Activated CD4-positive, alpha-beta memory T cell treated with anti-CD3 and anti-CD28 coated beads for 36 hours (primary cell): ENCODE measurements at regions of chr22 and their contacts with region 1.

Region 1: GRCh38 chr22:22748297-22748743 is 103.9 kb downstream of the GGTLC2 start:
- DNase-seq: peak; percentile 63
- H3K4me3 Mint-ChIP-seq: no peak overlapping the region
- H3K27ac Mint-ChIP-seq: no peak overlapping the region
- H3K4me1 Mint-ChIP-seq: peaks cover 8% of the 10 kb centered on the region
- H3K27me3 Mint-ChIP-seq: no peaks in the 10 kb centered on the region

Region 2: GRCh38 chr22:22138915-22139314 is 609.4 kb before region 1 on chr22:
- CTCF ChIA-PET with region 1: no interaction called
- POLR2A ChIA-PET with region 1: no interaction called
- intact Hi-C with region 1: no loop called
- DNase-seq: no peak
- H3K4me3 Mint-ChIP-seq: no peak overlapping the region
- H3K27ac Mint-ChIP-seq: no peak overlapping the region
- H3K4me1 Mint-ChIP-seq: no peaks in the 10 kb centered on the region
- H3K27me3 Mint-ChIP-seq: peaks cover 34% of the 10 kb centered on the region

Region 3: DNA sequence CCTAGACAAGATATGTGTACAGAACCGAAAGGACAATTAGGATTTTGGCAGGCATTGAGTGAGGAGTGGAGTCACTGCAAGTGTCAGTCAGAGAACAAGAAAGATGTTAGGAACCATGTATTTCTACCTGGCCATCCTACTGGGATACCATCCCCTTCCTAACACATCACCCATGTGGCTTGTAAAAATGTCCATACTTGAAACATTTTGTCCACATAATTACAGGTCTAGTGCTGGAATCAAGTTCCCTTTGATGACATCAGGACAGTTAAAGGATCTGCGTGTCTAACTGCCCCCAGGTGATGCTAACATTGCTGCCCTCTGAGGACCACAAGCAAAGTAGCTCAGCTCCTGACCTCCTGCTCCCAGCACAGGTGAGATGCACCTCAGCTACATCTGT is 135.8 kb before region 1 on chr22:
- CTCF ChIA-PET with region 1: no interaction called
- POLR2A ChIA-PET with region 1: no interaction called
- intact Hi-C with region 1: no loop called
- DNase-seq: no peak
- H3K4me3 Mint-ChIP-seq: no peak overlapping the region
- H3K27ac Mint-ChIP-seq: no peak overlapping the region
- H3K4me1 Mint-ChIP-seq: peaks cover 12% of the 10 kb centered on the region
- H3K27me3 Mint-ChIP-seq: peaks cover 9% of the 10 kb centered on the region

Region 4: GRCh38 chr22:22710719-22711531 is 37.4 kb before region 1 on chr22:
- CTCF ChIA-PET with region 1: interaction called, 15 read pairs
- POLR2A ChIA-PET with region 1: no interaction called
- intact Hi-C with region 1: loop called (anchors 5 kb)
- DNase-seq: peak; percentile 81
- H3K4me3 Mint-ChIP-seq: no peak overlapping the region
- H3K27ac Mint-ChIP-seq: no peak overlapping the region
- H3K4me1 Mint-ChIP-seq: no peaks in the 10 kb centered on the region
- H3K27me3 Mint-ChIP-seq: no peaks in the 10 kb centered on the region

Region 5: DNA sequence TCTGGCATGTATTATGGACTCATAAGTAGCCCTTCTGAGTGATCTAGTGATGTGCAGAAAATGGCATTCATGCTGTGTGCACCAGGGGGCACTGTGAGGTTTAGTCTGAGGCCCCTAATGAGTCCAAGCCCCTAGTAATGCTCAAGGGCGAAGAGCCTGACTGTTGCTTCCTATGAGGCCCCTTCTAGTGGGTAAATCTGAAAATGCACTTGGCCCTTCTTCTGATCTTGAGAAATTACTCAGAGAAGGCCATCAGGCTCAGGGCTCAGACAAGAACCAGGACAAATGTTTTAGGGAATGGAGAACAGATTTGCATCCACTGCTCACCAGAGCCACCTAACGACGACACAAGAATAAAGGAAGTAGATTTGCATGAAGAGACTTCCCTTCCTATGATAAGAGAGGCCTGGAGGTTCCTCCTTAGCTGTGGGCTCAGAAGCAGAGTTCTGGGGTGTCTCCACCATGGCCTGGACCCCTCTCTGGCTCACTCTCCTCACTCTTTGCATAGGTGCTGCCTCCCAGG is 28.1 kb before region 1 on chr22:
- CTCF ChIA-PET with region 1: interaction called, 16 read pairs
- POLR2A ChIA-PET with region 1: no interaction called
- intact Hi-C with region 1: no loop called
- DNase-seq: peak; percentile 61
- H3K4me3 Mint-ChIP-seq: no peak overlapping the region
- H3K27ac Mint-ChIP-seq: no peak overlapping the region
- H3K4me1 Mint-ChIP-seq: peaks cover 32% of the 10 kb centered on the region
- H3K27me3 Mint-ChIP-seq: peaks cover 3% of the 10 kb centered on the region

Region 6: DNA sequence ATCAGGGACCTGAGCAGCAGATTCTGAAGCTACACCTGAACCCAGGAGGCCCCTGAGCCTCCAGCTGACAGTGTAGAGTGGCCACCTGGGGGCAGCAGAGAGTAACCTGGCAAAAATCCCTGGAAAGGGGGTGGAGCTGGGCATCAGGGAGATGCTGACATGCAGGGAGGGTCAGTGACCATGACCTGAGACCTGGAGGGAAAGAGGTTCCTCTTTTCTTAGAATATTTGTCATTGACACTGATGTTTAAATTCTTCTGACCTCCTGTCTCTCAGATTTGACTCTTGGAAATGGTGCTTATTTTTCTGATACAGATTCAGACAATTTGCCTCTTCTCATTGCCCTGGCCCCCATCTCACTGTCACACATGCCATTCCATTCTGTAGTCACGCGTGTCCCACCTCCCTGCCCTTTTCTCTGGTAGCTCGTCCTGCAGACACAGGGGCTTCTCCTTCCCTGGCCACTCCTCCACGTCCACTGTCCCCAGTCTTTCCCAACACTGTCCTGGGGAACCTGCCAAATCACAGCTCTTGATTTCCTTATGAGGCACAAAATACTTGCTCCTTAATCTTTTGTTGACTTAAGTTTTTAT is 22.1 kb after region 1 on chr22:
- CTCF ChIA-PET with region 1: interaction called, 40 read pairs
- POLR2A ChIA-PET with region 1: no interaction called
- intact Hi-C with region 1: no loop called
- DNase-seq: peak; percentile 65
- H3K4me3 Mint-ChIP-seq: no peak overlapping the region
- H3K27ac Mint-ChIP-seq: no peak overlapping the region
- H3K4me1 Mint-ChIP-seq: peaks cover 9% of the 10 kb centered on the region
- H3K27me3 Mint-ChIP-seq: peaks cover 5% of the 10 kb centered on the region